IMR-90 (cell line): ENCODE measurements at regions of chr18 and their contacts with region 1.

Region 1: DNA sequence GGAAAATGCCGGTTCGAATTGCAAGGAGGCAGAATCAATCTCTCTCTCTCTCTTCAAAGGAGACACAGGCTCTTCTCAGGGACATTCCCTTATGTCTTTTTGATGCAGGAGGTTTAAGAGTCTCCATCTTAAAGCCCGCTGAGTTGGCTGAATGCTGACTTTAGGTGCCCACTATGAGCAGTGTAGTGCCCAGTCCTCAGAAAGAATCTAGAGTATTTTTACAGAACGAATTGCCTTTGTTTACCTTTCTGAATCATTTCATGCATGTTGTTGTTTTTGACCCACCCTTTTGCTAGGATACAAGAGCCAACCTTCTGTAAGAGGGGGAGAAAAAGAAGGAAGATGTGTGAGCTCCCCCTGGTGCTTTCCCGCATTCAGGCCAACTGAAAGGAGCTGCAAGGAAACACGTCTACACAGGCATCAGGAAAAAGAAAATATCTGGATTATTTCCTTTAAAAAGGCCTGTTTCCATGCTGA is 193.5 kb upstream of the TCF4 start:
- DNase-seq: peak; percentile 77
- ATAC-seq: peak; percentile 63
- H3K4me3 ChIP-seq: no peak overlapping the region
- H3K27ac ChIP-seq: no peak overlapping the region
- H3K4me1 ChIP-seq: no peaks in the 10 kb centered on the region; the same call in 1 of the 2 replicates
- H3K27me3 ChIP-seq: no peaks in the 10 kb centered on the region
- CTCF ChIP-seq: peak; percentile 80
- POLR2A ChIP-seq: no peak
- RAD21 ChIP-seq: peak; percentile 87

Region 2: DNA sequence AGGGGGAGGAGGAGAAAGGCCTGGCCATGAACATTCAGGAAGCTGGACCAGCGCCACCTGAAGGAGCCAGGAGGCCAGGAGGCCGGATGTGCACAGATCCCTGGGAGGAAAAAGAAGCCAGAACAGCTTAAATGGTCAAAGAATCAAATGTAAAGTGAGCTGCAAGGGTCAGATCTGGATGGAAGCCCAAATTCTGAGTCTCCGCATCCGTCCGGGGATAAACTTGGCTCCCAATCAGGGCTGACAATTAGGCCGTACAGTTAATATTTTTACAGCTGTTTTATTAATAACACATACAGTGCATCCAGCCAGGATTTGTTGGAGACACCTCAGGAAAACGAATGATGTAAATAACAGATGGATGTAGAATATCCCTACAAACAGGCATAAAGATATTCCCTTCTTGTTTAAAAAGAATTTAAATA is 301.6 kb after region 1 on chr18:
- CTCF ChIA-PET with region 1: no interaction called
- POLR2A ChIA-PET with region 1: no interaction called
- dilution Hi-C with region 1: no loop called
- in situ Hi-C with region 1: no loop called
- intact Hi-C with region 1: loop called (anchors 10 kb)
- DNase-seq: peak; percentile 92
- ATAC-seq: peak; percentile 78
- H3K4me3 ChIP-seq: no peak overlapping the region
- H3K27ac ChIP-seq: peak overlapping the region; percentile 63; the same call in 1 of the 2 replicates
- H3K4me1 ChIP-seq: peaks cover 11% of the 10 kb centered on the region
- H3K27me3 ChIP-seq: no peaks in the 10 kb centered on the region
- CTCF ChIP-seq: peak; percentile 31; the same call in 1 of the 2 replicates
- POLR2A ChIP-seq: no peak
- RAD21 ChIP-seq: 0 out of 2 replicates have a peak, but pooled peaks have one; percentile 14